ENCODE measurements at regions of chr12 and their contacts with region 1.

Region 1: DNA sequence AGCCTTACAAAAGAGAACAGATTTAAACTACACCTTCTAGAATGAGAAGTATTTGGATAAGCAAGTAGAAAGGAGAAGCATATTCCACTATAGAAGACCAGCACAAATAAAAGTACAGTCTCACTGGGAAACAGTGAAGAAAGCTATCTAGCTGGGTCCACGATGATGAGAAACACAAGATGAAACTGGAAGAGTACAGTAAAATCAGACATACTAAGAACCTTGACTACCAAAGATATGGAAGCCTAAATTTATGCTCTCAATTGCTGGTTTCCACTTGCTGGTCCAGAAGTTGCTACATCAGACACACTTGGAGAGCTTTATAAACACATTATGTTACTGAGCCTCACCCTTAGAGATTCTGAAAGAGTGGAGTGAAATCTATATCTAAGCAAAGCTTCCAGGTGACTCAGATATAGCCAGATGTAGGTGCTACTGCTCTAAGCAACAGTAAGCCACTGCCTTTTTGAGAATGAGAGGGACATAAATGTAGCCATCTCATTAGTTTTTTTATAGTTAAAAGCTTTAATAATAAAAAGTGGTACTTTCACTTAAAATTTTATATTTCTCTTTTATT is 96.3 kb upstream of the BBS10 start:
- DNase-seq: peak; percentile 63
- ATAC-seq: peak; percentile 49
- H3K4me3 ChIP-seq: no peak overlapping the region
- H3K27ac ChIP-seq: no peak overlapping the region
- H3K4me1 ChIP-seq: peaks cover 3% of the 10 kb centered on the region; the same call in 1 of the 2 replicates
- H3K27me3 ChIP-seq: no peaks in the 10 kb centered on the region
- CTCF ChIP-seq: no peak
- POLR2A ChIP-seq: no peak
- RAD21 ChIP-seq: no peak

Region 2: GRCh38 chr12:76366163-76366562 is 78.3 kb before region 1 on chr12:
- CTCF ChIA-PET with region 1: no interaction called
- POLR2A ChIA-PET with region 1: no interaction called
- dilution Hi-C with region 1: no loop called
- in situ Hi-C with region 1: no loop called
- intact Hi-C with region 1: loop called (anchors 5 kb)
- DNase-seq: no peak
- ATAC-seq: no peak
- H3K4me3 ChIP-seq: no peak overlapping the region
- H3K27ac ChIP-seq: no peak overlapping the region
- H3K4me1 ChIP-seq: no peaks in the 10 kb centered on the region
- H3K27me3 ChIP-seq: no peaks in the 10 kb centered on the region
- CTCF ChIP-seq: no peak
- POLR2A ChIP-seq: no peak
- RAD21 ChIP-seq: no peak

Region 3: DNA sequence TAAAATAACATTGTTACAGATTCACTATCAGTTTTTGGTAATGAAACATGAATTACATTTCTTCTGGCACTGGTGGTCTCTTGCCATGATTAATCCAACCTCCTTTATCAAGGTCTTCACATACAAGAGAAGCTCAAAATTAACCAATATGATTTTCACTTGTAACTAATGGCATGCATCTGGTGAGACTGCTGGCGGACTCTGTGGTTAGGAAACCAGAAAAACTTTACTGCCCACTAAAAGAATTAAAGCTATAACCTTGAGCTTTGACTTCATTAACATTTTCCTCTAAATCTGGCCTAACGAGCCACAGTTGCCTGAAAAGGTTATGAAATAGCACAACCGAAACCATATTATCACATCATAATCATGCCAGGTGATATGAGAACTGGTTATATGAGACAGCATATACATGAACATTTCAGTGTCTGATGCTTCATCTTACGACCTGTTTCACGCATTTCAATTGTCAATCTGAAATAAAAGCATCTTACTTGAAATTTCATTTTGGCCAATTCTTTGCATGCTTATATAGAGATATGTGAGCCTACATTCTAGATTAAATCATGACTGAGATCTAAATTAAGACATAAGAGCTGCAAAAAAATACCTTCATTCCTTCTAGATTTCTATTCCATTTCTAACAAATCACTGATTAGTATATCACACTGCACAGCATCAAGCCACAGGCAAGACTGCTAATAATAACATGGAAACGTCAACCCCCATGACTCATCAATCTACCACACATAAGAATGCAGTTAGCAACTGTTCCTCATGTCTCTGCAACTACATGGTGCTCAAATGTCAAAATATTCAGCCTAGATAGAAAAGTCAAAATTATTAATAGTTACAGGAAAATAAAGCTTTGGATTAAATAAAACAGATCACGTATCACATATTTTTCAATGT is 25.8 kb after region 1 on chr12:
- CTCF ChIA-PET with region 1: no interaction called
- POLR2A ChIA-PET with region 1: no interaction called
- dilution Hi-C with region 1: no loop called
- in situ Hi-C with region 1: no loop called
- intact Hi-C with region 1: no loop called
- DNase-seq: peak; percentile 93
- ATAC-seq: peak; percentile 99
- H3K4me3 ChIP-seq: no peak overlapping the region
- H3K27ac ChIP-seq: no peak overlapping the region
- H3K4me1 ChIP-seq: peaks cover 3% of the 10 kb centered on the region; the same call in 1 of the 2 replicates
- H3K27me3 ChIP-seq: no peaks in the 10 kb centered on the region
- CTCF ChIP-seq: no peak
- POLR2A ChIP-seq: no peak
- RAD21 ChIP-seq: no peak